ENCODE measurements at regions of chr7 and their contacts with region 1.

Region 1: GRCh38 chr7:21253740-21254687 is 173.9 kb upstream of the SP4 start:
- DNase-seq: peak; percentile 18 to 54 (median 39)
- H3K4me3 ChIP-seq: no peak overlapping the region
- H3K27ac ChIP-seq: no peak overlapping the region
- H3K4me1 ChIP-seq: no peaks in the 10 kb centered on the region
- H3K27me3 ChIP-seq: peaks cover 52% of the 10 kb centered on the region
- CTCF ChIP-seq: peak; percentile 5 to 46 (median 24)
- POLR2A ChIP-seq: no peak

Region 2: DNA sequence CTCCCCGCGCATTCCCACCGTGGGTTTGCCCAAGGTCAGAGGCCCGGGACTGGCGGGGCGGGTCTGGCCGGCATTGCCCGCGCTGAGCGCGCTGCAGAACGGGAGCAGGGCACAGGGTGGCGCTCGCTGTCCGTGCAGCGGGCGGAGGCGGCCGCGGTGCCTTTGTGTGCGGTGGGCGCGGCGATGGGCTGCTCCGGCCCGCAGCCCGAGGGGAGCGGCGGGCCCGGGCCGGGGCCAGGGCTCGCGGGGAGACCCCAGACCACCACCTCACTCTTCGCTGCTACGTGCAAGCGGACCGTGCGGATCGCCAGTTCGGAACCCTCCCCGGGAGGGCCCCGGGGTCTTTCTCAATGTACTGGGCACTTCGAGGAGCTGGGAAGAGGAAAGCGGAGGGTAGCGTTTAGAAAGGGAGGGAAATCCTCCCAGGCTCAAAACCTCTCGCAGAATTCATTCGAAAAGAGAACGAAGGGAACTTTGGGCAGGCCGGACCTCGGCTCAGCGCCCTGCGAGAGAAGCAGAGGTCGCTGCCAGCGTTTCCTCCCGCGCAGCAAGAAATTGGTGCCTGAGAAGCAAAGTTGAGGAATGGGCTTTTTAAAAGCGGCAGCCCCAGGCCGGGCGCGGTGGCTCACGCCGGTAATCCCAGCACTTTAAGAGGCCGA is 475.8 kb before region 1 on chr7:
- intact Hi-C with region 1: loop called in 1 of 2 experiments (anchors 10 kb)
- DNase-seq: peak in 1 of 7 donors; percentile 23
- H3K4me3 ChIP-seq: peak overlapping the region in 1 of 4 donors; percentile 40
- H3K27ac ChIP-seq: no peak overlapping the region
- H3K4me1 ChIP-seq: peaks cover 0 to 11% of the 10 kb centered on the region in 2 donors
- H3K27me3 ChIP-seq: peaks cover 98% of the 10 kb centered on the region
- CTCF ChIP-seq: peak in 4 of 6 experiments; percentile 19 to 68 (median 45)
- POLR2A ChIP-seq: no peak